Left colon (tissue), 2 donors: ENCODE measurements at regions of chr15 and their contacts with region 1.

Region 1: GRCh38 chr15:38991126-38991525 is 426.5 kb upstream of the RASGRP1 start:
- DNase-seq: no peak
- ATAC-seq: no peak

Region 2: DNA sequence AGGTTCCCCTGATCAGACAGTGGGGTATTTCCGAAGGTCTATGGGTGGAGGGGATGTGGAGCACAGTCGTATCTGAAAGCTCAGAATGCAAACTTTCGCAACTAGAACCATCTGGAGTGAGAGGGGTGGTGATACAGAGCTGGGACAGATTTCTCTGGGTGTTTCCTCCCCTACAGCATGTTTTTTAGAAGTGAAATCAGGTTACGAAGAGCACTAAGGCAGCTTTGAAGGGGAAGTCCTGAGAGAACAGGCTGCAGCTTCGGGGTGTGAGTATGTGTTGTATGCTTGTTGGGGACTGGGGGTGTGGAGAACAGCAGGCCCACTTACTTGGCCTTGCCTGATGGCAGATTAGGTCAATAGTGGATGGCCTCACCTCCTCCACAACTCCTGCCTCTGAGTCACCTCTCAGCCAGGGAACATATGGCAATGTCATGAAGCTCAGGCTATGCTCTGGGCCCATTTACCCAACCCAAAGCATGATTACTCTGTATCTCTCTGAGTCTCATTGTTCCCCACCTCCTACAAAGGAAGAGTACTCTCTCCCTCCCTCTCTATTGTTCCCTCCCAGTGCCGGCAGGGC is 319.4 kb before region 1 on chr15:
- intact Hi-C with region 1: no loop called
- DNase-seq: no peak
- ATAC-seq: no peak

Region 3: DNA sequence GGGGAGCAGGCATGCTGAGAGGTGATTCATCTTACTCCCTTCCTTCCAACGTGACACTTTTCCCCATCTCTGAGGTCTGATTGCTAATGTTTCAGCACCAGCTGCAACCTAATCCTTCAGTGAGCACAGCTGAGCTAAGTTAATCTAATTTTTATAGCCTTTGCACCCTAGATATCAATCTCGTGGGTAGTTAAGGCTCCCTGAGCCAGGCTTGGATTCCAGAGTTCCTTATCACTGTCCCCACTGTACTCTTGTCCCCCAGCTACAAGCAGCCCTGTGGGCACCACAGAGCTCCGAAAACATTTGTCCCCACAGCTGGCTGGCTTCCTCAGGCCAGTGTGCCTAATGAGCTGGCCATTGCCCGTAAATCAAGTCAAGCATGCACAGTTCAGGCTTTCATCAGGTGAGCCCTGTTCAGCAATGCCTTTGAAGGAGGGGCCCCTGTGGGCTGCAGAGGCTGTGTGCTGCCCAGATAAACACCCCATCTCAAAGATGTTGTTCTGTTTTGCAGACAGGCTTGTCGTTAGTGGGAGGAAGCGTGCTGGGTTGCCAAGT is 49.6 kb before region 1 on chr15:
- intact Hi-C with region 1: loop called in 1 of 2 experiments (anchors 5 kb)
- DNase-seq: no peak
- ATAC-seq: no peak